ENCODE measurements at regions of chr9 and their contacts with region 1.

Region 1: DNA sequence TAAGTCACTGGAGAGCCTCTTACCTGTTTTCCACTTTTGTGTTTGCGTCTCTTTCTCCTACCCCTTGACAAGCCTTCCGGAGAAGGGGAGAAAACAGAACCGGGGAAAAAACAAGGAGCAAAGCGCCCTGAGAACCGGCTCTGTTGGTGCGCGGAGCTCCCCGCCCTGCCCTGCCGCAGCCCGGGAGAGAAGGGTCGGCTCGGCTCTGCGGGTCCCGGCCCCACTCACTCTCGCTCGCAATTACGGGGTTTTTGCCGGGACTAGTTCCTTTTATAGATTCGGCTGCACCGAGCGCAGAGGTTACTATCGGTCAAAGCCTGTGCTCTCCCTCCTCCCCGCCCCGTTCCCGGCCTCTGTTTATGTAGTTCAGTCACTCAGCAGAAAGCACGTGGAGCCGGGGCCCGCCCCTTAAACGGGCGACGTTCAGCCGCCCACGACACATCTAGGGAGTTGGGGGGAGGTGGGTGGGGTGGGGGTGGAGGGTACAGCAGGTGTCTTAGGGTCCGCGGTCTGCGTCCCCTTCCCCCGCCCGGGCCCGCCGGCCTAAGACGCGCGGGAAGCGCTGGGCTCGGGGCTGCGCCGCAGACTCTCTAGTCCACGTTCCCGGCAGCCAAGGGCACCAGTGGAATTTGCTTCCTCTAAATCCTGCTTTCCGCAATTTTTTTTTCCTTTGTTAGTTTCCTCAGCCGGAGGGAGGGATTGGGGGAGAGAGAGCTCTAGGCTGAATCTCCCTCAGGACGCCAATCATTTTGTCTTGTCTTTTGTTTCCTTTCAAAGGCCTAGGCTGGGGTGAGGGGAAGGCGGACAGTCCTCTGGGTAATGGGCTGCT is at the start of gene ABCA1:
- DNase-seq: peak; percentile 89
- H3K4me3 Mint-ChIP-seq: peak within 1 kb of the TSS; percentile 89
- H3K27ac Mint-ChIP-seq: peak within 1 kb of the TSS; percentile 59
- H3K4me1 Mint-ChIP-seq: peaks cover 15% of the 10 kb centered on the region
- H3K27me3 Mint-ChIP-seq: peaks cover 36% of the 10 kb centered on the region
- total RNA-seq, gene ABCA1: 0.31 and 0.56 TPM in 2 replicates

Region 2: GRCh38 chr9:104817437-104817836 is 110.7 kb before region 1 on chr9:
- intact Hi-C with region 1: no loop called
- DNase-seq: no peak
- H3K4me3 Mint-ChIP-seq: no peak overlapping the region
- H3K27ac Mint-ChIP-seq: no peak overlapping the region
- H3K4me1 Mint-ChIP-seq: no peaks in the 10 kb centered on the region
- H3K27me3 Mint-ChIP-seq: no peaks in the 10 kb centered on the region

Region 3: DNA sequence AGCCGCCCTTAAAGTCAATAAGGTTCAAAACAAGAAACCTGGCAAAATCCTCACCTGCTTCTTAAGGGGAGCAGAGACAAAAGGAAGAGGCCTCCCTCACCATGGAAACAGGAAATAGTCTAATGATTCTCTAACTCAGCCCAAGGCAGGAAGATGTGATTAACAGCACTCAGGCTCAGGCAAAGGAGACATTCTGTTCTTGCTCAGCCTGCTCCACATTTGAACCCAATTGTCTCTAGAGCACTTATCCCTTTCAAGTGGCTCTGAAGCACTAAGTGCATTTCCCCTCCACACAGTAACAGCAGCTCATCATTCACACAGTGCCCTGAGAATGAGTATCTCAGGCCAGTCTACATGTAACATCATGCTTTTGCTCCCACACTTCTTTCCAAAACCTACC is 91.9 kb before region 1 on chr9:
- intact Hi-C with region 1: no loop called
- DNase-seq: peak; percentile 62
- H3K4me3 Mint-ChIP-seq: no peak overlapping the region
- H3K27ac Mint-ChIP-seq: no peak overlapping the region
- H3K4me1 Mint-ChIP-seq: peaks cover 6% of the 10 kb centered on the region
- H3K27me3 Mint-ChIP-seq: no peaks in the 10 kb centered on the region

Region 4: DNA sequence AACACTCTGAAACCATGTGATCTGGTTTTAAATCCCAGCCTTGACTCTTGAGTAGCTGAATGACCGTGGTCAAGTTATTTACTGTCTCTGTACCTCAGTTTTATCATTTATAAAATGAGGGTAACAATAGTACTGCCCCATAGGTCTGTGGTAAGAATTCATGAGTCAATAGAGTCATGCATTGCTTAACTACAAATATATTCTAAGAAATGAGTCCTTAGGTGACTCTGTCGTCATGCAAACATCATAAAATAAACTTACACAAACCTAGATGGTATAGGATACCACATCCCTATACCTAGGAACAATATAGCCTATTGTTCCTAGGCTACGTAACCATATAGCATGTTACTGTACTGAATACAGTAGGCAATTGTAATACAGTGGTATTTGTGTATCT is 20.2 kb after region 1 on chr9:
- intact Hi-C with region 1: no loop called
- DNase-seq: no peak
- H3K4me3 Mint-ChIP-seq: no peak overlapping the region
- H3K27ac Mint-ChIP-seq: no peak overlapping the region
- H3K4me1 Mint-ChIP-seq: peaks cover 2% of the 10 kb centered on the region
- H3K27me3 Mint-ChIP-seq: no peaks in the 10 kb centered on the region

Region 5: GRCh38 chr9:104961238-104961637 is 33.1 kb after region 1 on chr9:
- intact Hi-C with region 1: loop called (anchors 1 kb)
- DNase-seq: peak; percentile 87
- H3K4me3 Mint-ChIP-seq: peak overlapping the region; percentile 48
- H3K27ac Mint-ChIP-seq: peak overlapping the region; percentile 75
- H3K4me1 Mint-ChIP-seq: peaks cover 28% of the 10 kb centered on the region
- H3K27me3 Mint-ChIP-seq: no peaks in the 10 kb centered on the region

Region 6: GRCh38 chr9:104968025-104968982 is 40.2 kb after region 1 on chr9:
- intact Hi-C with region 1: loop called (anchors 1 kb)
- DNase-seq: peak; percentile 97
- H3K4me3 Mint-ChIP-seq: peak overlapping the region; percentile 96
- H3K27ac Mint-ChIP-seq: peak overlapping the region; percentile 72
- H3K4me1 Mint-ChIP-seq: peaks cover 8% of the 10 kb centered on the region
- H3K27me3 Mint-ChIP-seq: peaks cover 27% of the 10 kb centered on the region

Region 7: GRCh38 chr9:105053209-105053652 is 125.1 kb after region 1 on chr9:
- intact Hi-C with region 1: loop called (anchors 1 kb)
- DNase-seq: peak; percentile 62
- H3K4me3 Mint-ChIP-seq: no peak overlapping the region
- H3K27ac Mint-ChIP-seq: peak overlapping the region; percentile 23
- H3K4me1 Mint-ChIP-seq: peaks cover 16% of the 10 kb centered on the region
- H3K27me3 Mint-ChIP-seq: no peaks in the 10 kb centered on the region

Region 8: DNA sequence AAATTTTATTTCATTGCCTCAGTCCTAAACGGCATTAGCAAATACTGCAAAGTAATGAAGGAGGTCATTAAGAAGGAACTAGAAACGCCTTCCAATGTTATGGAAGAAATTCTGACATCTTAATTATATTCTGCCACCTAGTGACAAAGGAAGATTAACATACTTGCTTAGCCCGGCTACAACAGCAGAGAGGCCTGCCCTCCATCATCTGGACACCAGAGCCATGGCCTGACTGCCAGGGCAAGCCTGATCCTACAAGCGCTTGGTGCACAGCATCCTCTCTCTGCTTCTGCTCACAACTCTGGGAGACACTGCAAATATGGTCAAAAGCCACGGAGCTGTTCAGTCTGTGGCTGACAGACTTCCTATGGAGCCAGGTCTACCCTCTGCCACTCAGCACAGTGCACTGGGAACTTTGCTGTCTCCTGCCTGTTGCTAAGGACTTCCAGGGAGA is 229.0 kb after region 1 on chr9:
- intact Hi-C with region 1: loop called (anchors 2 kb)
- DNase-seq: peak; percentile 68
- H3K4me3 Mint-ChIP-seq: no peak overlapping the region
- H3K27ac Mint-ChIP-seq: no peak overlapping the region
- H3K4me1 Mint-ChIP-seq: peaks cover 6% of the 10 kb centered on the region
- H3K27me3 Mint-ChIP-seq: no peaks in the 10 kb centered on the region

Region 9: GRCh38 chr9:105244003-105244733 is 316.0 kb after region 1 on chr9 and contains the start of gene SLC44A1:
- intact Hi-C with region 1: loop called (anchors 10 kb)
- DNase-seq: peak; percentile 98
- H3K4me3 Mint-ChIP-seq: peak within 1 kb of the TSS; percentile 88
- H3K27ac Mint-ChIP-seq: peak within 1 kb of the TSS; percentile 74
- H3K4me1 Mint-ChIP-seq: peaks cover 22% of the 10 kb centered on the region
- H3K27me3 Mint-ChIP-seq: peaks cover 73% of the 10 kb centered on the region
- total RNA-seq, gene SLC44A1: 2.5 and 2.9 TPM in 2 replicates

Region 10: GRCh38 chr9:105414947-105415661 is 487.0 kb after region 1 on chr9:
- intact Hi-C with region 1: loop called (anchors 1 kb)
- DNase-seq: peak; percentile 87
- H3K4me3 Mint-ChIP-seq: no peak overlapping the region
- H3K27ac Mint-ChIP-seq: no peak overlapping the region
- H3K4me1 Mint-ChIP-seq: peaks cover 11% of the 10 kb centered on the region
- H3K27me3 Mint-ChIP-seq: peaks cover 39% of the 10 kb centered on the region